Endothelial cell of umbilical vein (primary cell): ENCODE measurements at regions of chr4 and their contacts with region 1.

Region 1: DNA sequence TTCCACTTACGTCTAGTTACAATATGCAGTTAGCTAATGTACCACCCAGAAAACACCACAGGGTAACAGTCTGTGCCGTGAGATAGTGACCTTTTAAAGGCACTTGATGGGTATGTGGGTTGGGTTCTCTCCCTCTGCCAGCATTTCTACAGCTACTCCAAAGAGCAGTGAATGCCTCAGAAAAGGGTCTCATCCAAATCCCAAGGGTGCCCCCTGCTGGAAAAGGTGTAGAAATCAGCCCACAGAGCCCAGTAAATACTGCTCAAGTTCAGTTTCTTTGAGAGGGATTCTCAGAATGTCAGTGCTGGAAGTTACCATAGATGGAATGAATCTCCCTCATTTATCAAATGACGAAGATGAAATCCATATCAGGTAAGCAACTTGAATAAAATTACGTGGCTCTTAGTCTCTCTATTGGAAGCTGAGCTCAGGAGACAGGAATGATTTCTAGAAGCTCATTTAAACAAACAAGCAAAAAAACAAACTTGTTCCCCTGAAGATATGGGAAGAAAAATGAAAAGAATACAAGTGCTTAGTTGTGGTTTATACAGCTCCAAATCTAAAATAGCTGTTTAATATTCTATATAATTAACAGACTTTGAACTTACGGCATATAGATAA is 9.5 kb downstream of the RNF175 start:
- DNase-seq: peak; percentile 69
- H3K4me3 ChIP-seq: no peak overlapping the region
- H3K27ac ChIP-seq: no peak overlapping the region
- H3K4me1 ChIP-seq: no peaks in the 10 kb centered on the region
- H3K27me3 ChIP-seq: peaks cover 3 to 7% of the 10 kb centered on the region in 2 experiments
- CTCF ChIP-seq: peak; percentile 70 to 75
- POLR2A ChIP-seq: no peak

Region 2: GRCh38 chr4:152663203-152664066 is 1086.9 kb before region 1 on chr4:
- CTCF ChIA-PET with region 1: no interaction called
- POLR2A ChIA-PET with region 1: no interaction called
- dilution Hi-C with region 1: no loop called
- intact Hi-C with region 1: no loop called
- DNase-seq: no peak
- H3K4me3 ChIP-seq: no peak overlapping the region
- H3K27ac ChIP-seq: no peak overlapping the region
- H3K4me1 ChIP-seq: no peaks in the 10 kb centered on the region
- H3K27me3 ChIP-seq: no peaks in the 10 kb centered on the region
- CTCF ChIP-seq: no peak
- POLR2A ChIP-seq: no peak

Region 3: DNA sequence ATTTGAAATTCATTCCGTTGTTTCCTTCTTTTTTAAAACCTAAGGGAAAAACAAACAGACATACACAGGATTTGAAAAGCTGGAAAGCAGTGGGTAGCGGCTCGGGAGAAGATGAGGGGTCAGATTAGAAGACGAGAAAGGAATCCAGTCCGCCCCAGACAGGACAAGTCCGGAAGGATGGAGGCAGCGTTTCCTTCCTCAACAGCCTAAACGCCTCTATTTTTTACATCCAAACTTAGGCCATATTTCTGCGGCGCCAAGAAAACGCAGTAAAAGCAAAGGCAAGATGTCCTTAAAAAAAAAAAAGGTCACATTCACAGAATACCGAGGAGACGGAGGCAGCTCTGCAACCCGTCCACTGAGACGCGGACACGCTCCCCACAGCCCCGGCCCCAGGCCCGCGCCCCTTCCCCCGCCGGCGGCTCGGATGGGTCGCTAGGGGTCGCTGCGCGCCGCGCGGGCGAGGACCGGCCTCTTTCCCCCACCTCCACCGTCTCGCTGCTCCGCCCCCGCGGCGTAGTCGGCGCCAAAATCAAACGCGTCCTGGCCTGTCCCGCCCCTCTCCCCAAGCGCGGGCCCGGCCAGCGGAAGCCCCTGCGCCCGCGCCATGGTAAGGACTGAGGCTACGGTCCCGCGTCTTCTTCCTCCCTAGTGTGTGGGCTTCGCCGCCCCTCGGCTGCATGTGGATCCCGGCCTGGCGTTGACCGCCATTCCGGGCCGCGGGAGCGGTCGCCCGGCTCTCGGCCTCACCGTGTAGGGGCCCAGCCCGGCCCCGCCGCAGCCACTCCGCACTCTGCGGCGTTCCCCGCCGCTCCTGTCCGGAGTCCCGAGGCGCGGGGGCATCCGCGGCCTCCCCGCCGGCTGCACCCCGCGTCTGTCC is 405.9 kb before region 1 on chr4 and contains the start of gene MND1:
- CTCF ChIA-PET with region 1: interaction called, 3 read pairs
- POLR2A ChIA-PET with region 1: no interaction called
- dilution Hi-C with region 1: no loop called
- intact Hi-C with region 1: loop called (anchors 1 kb)
- DNase-seq: peak; percentile 77
- H3K4me3 ChIP-seq: peak within 1 kb of the TSS; percentile 54 to 82 (median 76)
- H3K27ac ChIP-seq: peak within 1 kb of the TSS; percentile 78
- H3K4me1 ChIP-seq: peaks cover 25% of the 10 kb centered on the region
- H3K27me3 ChIP-seq: no peaks in the 10 kb centered on the region
- CTCF ChIP-seq: peak; percentile 77 to 87
- POLR2A ChIP-seq: no peak
- total RNA-seq, gene MND1: 7.7 and 8.2 TPM in 2 replicates

Region 4: GRCh38 chr4:153634738-153635353 is 115.5 kb before region 1 on chr4:
- CTCF ChIA-PET with region 1: interaction called, 96 read pairs
- POLR2A ChIA-PET with region 1: no interaction called
- dilution Hi-C with region 1: no loop called
- intact Hi-C with region 1: loop called (anchors 1 kb)
- DNase-seq: peak; percentile 14
- H3K4me3 ChIP-seq: no peak overlapping the region
- H3K27ac ChIP-seq: no peak overlapping the region
- H3K4me1 ChIP-seq: no peaks in the 10 kb centered on the region
- H3K27me3 ChIP-seq: no peaks in the 10 kb centered on the region
- CTCF ChIP-seq: peak; percentile 45 to 53
- POLR2A ChIP-seq: no peak

Region 5: DNA sequence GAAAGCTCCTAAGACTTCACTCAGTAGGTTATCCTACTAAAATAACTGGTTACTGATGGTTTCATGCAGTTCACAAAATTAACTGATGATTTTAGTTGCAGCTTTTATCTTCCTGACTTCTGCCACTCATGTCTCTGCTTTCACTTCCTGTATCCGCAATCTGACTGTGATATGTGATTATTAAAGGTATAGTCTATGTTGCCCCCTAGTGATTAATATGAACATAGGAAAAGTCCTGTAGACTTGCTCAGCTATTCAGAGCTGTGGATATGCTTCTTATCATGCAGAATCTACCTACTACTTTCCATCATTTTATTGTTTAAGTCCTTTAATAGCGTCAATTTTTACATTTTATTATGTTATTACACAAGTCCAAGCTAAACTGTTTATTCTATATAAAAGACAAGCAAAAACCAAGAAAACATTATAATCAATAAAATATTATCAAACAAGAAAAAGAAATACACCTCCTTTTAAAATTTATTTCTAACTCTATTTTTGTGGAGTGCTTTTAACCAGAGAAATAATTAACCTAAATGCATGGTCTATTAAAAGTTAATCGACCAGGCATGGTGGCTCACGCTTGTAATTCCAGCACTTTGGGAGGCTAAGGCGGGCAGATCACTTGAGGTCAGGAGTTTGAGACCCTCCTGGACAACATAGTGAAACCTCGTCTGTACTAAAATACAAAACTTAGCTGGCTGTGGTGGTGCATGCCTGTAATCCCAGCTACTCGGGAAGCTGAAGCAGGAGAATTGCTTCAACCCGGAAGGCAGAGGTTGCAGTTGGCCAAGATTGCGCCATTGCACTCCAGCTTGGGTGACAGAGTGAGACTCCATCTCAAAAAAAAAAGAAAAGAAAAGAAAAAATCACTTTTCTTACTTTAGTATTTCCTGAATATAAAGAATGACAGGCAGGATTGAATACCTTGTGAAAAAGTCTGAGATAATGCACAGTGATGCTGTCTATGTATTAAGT is 106.6 kb before region 1 on chr4:
- CTCF ChIA-PET with region 1: interaction called, 27 read pairs
- POLR2A ChIA-PET with region 1: no interaction called
- dilution Hi-C with region 1: no loop called
- intact Hi-C with region 1: loop called (anchors 2 kb)
- DNase-seq: peak; percentile 56
- H3K4me3 ChIP-seq: no peak overlapping the region
- H3K27ac ChIP-seq: no peak overlapping the region
- H3K4me1 ChIP-seq: peaks cover 4% of the 10 kb centered on the region
- H3K27me3 ChIP-seq: no peaks in the 10 kb centered on the region
- CTCF ChIP-seq: peak; percentile 25 to 26
- POLR2A ChIP-seq: no peak

Region 6: DNA sequence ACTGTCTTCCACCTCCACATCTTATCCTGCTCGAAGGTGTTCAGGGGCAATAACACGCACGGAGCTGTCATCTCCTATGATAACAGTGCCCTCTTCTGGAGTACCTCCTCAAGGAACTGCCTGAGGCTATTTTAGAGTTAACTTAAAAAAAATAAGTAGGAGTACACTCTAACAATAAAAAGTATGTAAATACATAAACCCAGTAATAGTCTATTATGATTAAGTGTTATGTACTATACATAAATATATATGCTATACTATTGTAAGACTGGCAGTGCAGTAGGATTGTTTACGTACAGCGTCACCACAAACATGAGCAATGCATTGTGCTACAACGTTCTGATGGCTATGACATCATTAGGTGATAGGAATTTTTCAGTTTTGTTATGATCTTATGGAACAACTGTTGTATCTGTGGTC is 100.7 kb before region 1 on chr4:
- CTCF ChIA-PET with region 1: interaction called, 27 read pairs
- POLR2A ChIA-PET with region 1: no interaction called
- dilution Hi-C with region 1: no loop called
- intact Hi-C with region 1: loop called (anchors 1 kb)
- DNase-seq: peak; percentile 21
- H3K4me3 ChIP-seq: no peak overlapping the region
- H3K27ac ChIP-seq: no peak overlapping the region
- H3K4me1 ChIP-seq: peaks cover 5% of the 10 kb centered on the region
- H3K27me3 ChIP-seq: peaks cover 0 to 2% of the 10 kb centered on the region in 2 experiments
- CTCF ChIP-seq: peak in 1 of 2 donors; percentile 10
- POLR2A ChIP-seq: no peak

Region 7: GRCh38 chr4:153731239-153731638 is 19.1 kb before region 1 on chr4:
- CTCF ChIA-PET with region 1: interaction called, 15 read pairs
- POLR2A ChIA-PET with region 1: no interaction called
- dilution Hi-C with region 1: no loop called
- intact Hi-C with region 1: no loop called
- DNase-seq: no peak
- H3K4me3 ChIP-seq: no peak overlapping the region
- H3K27ac ChIP-seq: no peak overlapping the region
- H3K4me1 ChIP-seq: no peaks in the 10 kb centered on the region
- H3K27me3 ChIP-seq: no peaks in the 10 kb centered on the region
- CTCF ChIP-seq: no peak
- POLR2A ChIP-seq: no peak